ENCODE measurements at regions of chr1 and their contacts with region 1.

Region 1: GRCh38 chr1:203871107-203871875 is 9.9 kb downstream of the SNRPE start:
- DNase-seq: peak in 1 of 2 experiments; percentile 19
- H3K4me3 ChIP-seq: no peak overlapping the region
- H3K27ac ChIP-seq: no peak overlapping the region
- H3K4me1 ChIP-seq: peaks cover 0 to 5% (median 0%) of the 10 kb centered on the region in 4 experiments; a peak in 1 of 7 replicates
- H3K27me3 ChIP-seq: no peaks in the 10 kb centered on the region
- CTCF ChIP-seq: peak; percentile 20 to 100 (median 91)
- EP300 ChIP-seq: no peak
- POLR2A ChIP-seq: no peak
- RAD21 ChIP-seq: peak; percentile 98

Region 2: DNA sequence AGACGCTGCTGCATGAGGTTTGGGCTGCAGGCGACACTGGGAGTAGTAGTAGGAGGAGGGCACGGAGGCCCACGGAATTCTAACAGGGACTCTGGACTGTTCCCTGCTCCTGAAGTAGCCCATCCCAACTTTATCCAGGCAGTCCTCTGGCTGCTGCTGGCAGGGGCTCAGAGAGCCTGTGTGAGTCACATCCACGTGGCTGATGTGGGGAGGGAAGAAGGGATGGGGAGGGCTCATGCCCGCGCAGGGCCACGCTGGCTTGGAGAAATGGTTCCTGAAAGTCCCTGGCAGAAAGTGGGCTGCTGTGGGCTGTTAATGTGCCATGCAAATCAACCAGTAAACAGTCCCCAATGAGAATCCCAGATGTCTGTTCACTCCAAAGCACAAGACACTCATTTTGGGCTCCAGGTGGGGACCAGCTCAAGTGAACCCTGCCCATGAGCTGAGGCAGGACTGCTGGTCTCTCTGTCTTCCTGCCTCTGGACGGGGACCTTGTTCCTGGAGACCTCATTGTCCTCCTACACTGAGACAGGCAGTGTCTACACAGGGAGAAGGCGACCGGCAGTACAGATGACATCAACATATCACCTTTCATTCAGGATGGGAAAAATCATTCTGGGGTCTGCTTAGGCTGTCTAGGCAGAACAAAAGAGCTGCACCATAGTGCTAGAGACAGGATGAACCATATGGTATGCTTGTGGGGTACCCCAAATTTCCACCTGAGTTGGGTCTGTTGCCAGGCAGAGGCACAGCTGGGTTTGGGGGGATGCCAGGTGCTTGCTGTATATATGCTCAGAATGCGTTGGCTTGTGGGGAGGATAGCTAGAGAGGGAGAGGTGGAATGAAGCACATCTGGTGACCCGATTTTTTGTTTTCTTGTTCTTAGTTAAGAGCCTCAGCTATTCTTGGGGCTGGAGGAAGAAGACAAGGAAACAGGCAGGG is 462.5 kb before region 1 on chr1:
- CTCF ChIA-PET with region 1: no interaction called
- POLR2A ChIA-PET with region 1: no interaction called
- DNase-seq: no peak
- H3K4me3 ChIP-seq: no peak overlapping the region
- H3K27ac ChIP-seq: no peak overlapping the region
- H3K4me1 ChIP-seq: no peaks in the 10 kb centered on the region
- H3K27me3 ChIP-seq: no peaks in the 10 kb centered on the region
- CTCF ChIP-seq: no peak
- EP300 ChIP-seq: no peak
- POLR2A ChIP-seq: no peak
- RAD21 ChIP-seq: no peak

Region 3: GRCh38 chr1:203720262-203720661 is 151.0 kb before region 1 on chr1:
- CTCF ChIA-PET with region 1: no interaction called
- POLR2A ChIA-PET with region 1: no interaction called
- DNase-seq: no peak
- H3K4me3 ChIP-seq: no peak overlapping the region
- H3K27ac ChIP-seq: no peak overlapping the region
- H3K4me1 ChIP-seq: no peaks in the 10 kb centered on the region
- H3K27me3 ChIP-seq: no peaks in the 10 kb centered on the region
- CTCF ChIP-seq: no peak
- EP300 ChIP-seq: no peak
- POLR2A ChIP-seq: no peak
- RAD21 ChIP-seq: no peak

Region 4: DNA sequence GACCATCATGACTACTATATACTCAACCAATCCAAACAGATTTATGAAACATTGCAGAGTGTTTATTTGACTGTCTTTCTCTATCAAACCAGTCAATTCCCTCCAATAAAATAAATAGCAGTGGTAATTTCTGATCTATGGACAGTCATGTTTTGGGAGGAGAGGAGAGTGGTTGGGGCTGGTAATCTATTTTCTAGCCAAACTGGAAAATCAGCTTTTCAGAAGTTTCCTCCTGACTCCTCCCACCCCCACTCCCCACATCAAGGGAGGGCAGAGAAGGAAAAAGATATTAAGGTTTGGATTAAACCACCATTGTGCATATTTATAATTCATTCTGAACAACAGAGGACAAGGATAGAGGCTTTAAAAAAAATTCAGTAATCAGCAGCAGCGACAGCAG is 132.2 kb after region 1 on chr1:
- CTCF ChIA-PET with region 1: interaction called, 12 read pairs
- POLR2A ChIA-PET with region 1: interaction called, 7 read pairs
- DNase-seq: no peak
- H3K4me3 ChIP-seq: no peak overlapping the region; a peak in 1 of 8 replicates
- H3K27ac ChIP-seq: no peak overlapping the region
- H3K4me1 ChIP-seq: peaks cover 0 to 13% (median 7%) of the 10 kb centered on the region in 4 experiments; a peak in 3 of 7 replicates
- H3K27me3 ChIP-seq: no peaks in the 10 kb centered on the region
- CTCF ChIP-seq: no peak
- EP300 ChIP-seq: no peak
- POLR2A ChIP-seq: no peak
- RAD21 ChIP-seq: no peak

Region 5: GRCh38 chr1:204072931-204073836 is 201.9 kb after region 1 on chr1 and contains the start of gene SOX13:
- CTCF ChIA-PET with region 1: interaction called, 40 read pairs
- POLR2A ChIA-PET with region 1: interaction called, 9 read pairs
- DNase-seq: peak; percentile 80 to 93
- H3K4me3 ChIP-seq: peak within 1 kb of the TSS; percentile 90 to 98 (median 94)
- H3K27ac ChIP-seq: peak within 1 kb of the TSS; percentile 71; the same call in 1 of the 2 replicates
- H3K4me1 ChIP-seq: peaks cover 13 to 31% (median 24%) of the 10 kb centered on the region in 4 experiments
- H3K27me3 ChIP-seq: no peaks in the 10 kb centered on the region
- CTCF ChIP-seq: peak; percentile 17 to 46 (median 21)
- EP300 ChIP-seq: no peak
- POLR2A ChIP-seq: peak; percentile 83 to 93
- RAD21 ChIP-seq: peak; percentile 49 to 72
- total RNA-seq, gene SOX13: 173 and 180 TPM in 2 replicates

Region 6: GRCh38 chr1:204104133-204104871 is 233.0 kb after region 1 on chr1:
- CTCF ChIA-PET with region 1: interaction called, 20 read pairs
- POLR2A ChIA-PET with region 1: interaction called, 6 read pairs
- DNase-seq: no peak
- H3K4me3 ChIP-seq: no peak overlapping the region
- H3K27ac ChIP-seq: no peak overlapping the region
- H3K4me1 ChIP-seq: peaks cover 27 to 55% (median 36%) of the 10 kb centered on the region in 4 experiments
- H3K27me3 ChIP-seq: no peaks in the 10 kb centered on the region
- CTCF ChIP-seq: no peak
- EP300 ChIP-seq: no peak
- POLR2A ChIP-seq: no peak
- RAD21 ChIP-seq: no peak

Region 7: DNA sequence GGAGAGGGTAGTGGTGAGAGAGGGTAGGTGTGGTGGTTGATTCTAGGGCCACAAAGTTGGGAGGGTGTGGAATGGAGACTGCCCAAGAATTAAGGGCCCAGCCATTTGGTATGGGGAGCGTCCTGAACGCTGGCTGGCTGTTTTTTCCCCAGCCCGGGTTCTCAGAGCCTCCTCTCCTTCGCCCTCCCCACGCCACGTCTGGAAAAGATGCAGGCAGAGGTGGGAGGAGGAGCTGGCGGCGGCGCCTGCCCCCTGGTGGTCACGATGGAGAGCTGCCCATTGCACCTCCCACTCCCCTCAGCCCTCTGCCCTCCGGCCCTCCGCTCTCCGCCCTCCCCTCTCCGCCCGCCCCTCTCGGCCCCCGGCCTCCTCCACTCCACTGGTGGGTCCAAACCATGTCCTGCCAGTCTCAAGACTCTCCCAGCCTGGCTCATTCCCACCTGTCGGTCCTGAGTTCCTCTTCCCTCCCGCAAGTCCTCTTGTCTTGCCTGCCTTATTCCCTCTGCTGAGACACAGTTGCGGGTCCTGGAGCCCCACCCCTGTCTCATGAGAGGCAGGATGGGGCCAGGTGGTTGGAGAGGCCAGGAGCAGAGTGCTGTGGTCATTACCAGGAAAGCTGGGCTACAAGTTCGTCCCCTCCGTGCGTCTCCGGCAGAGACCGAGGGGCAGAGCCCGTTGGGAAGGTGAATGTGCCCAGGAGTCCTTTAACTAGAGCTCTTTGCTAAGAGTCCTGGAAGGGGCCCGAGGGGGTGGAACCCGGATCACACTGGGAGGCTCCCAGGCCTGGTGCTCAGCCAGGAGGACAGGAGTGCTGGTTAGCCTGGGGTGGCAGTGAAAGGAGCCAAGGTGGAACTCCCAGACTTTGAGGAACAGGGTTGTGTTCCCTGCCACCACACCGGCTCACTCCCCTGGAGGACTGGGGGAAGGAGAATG is 257.9 kb after region 1 on chr1:
- CTCF ChIA-PET with region 1: interaction called, 261 read pairs
- POLR2A ChIA-PET with region 1: interaction called, 174 read pairs
- DNase-seq: peak; percentile 56 to 94
- H3K4me3 ChIP-seq: peak overlapping the region in 2 of 4 experiments; percentile 19 to 47; a peak in 3 of 8 replicates
- H3K27ac ChIP-seq: peak overlapping the region; percentile 53; the same call in 1 of the 2 replicates
- H3K4me1 ChIP-seq: peaks cover 4 to 24% (median 7%) of the 10 kb centered on the region in 4 experiments
- H3K27me3 ChIP-seq: no peaks in the 10 kb centered on the region; a peak in 1 of 7 replicates
- CTCF ChIP-seq: peak in 2 of 3 experiments; percentile 83 to 84; a peak in 3 of 4 replicates
- EP300 ChIP-seq: no peak
- POLR2A ChIP-seq: peak in 1 of 2 experiments; percentile 49; a peak in 1 of 3 replicates
- RAD21 ChIP-seq: peak; percentile 81 to 88

Region 8: DNA sequence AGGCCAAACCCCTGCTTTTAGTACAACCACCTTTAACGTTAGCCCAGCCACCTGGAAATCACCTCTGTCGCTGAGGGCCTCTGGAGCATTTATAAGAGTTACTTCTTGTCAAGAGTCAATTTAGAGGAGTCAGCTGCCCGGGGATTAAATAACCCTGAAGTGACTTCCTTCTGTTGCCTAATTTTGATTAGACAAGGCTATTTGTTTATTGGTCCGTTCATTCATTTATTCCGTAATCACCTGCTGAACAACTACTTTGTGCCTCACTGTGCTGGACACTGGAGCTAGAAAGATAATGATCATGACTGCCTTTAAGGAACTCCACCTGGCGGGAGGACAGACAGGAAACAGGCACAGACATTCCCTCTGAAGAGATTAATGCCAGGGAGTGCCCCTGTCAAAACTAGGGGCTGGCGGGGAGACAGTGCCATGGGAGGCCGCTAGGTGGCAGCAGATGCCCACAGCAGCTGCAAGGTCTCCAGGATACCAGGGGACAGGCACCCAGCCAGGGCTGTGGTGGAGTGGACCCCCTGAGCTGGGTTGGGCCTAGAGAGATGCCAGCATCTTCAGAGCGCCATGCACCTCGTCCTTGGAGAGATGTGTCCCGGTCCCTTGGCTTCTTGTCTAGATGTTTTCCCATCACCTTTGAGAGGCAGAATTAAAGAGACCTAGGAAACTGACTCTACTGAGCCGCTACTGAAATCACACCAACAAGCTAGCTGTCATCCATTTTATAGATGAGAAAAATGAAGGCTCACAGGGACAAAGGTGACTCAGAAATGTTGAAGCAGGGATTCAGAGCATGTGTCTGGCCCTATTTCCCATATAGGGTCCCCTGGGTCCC is 291.2 kb after region 1 on chr1:
- CTCF ChIA-PET with region 1: interaction called, 18 read pairs
- POLR2A ChIA-PET with region 1: interaction called, 3 read pairs
- DNase-seq: peak; percentile 63 to 100
- H3K4me3 ChIP-seq: no peak overlapping the region
- H3K27ac ChIP-seq: no peak overlapping the region
- H3K4me1 ChIP-seq: no peaks in the 10 kb centered on the region; a peak in 1 of 7 replicates
- H3K27me3 ChIP-seq: no peaks in the 10 kb centered on the region
- CTCF ChIP-seq: peak; percentile 99
- EP300 ChIP-seq: no peak
- POLR2A ChIP-seq: no peak
- RAD21 ChIP-seq: peak; percentile 100